ENCODE measurements at regions of chr22 and their contacts with region 1.

Region 1: DNA sequence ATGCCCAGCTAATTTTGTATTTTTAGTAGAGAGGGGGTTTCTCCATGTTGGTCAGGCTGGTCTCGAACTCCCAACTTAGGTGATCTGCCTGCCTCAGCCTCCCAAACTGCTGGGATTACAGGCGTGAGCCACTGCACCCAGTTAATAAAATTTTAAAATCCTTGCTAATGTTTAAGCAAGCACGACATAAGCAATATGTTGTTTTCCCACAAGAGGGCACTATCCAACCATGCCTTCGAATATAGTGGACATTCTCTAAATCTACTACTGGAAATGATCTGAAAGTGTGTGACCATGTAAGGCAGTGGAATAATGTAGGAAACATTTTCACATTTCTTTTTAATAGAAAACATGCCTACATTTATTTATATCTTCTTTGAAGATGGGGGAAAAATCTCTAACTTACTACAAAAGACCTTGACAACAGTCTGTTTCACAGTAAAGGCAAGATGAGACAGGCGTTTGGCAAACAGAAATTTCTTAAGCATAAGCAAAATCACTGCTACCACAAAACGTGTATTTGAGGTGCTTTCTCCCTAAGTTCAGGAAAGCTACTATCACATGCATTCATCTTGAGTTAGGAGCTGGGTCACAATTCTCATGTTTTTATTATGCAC is 38.2 kb downstream of the PITPNB start:
- DNase-seq: no peak
- H3K4me3 ChIP-seq: peak overlapping the region in 1 of 3 donors; percentile 13
- H3K27ac ChIP-seq: peak overlapping the region; percentile 68 to 75
- H3K4me1 ChIP-seq: peaks cover 0 to 9% of the 10 kb centered on the region in 2 donors
- H3K27me3 ChIP-seq: no peaks in the 10 kb centered on the region
- CTCF ChIP-seq: peak in 2 of 3 donors; percentile 69 to 78
- POLR2A ChIP-seq: no peak

Region 2: DNA sequence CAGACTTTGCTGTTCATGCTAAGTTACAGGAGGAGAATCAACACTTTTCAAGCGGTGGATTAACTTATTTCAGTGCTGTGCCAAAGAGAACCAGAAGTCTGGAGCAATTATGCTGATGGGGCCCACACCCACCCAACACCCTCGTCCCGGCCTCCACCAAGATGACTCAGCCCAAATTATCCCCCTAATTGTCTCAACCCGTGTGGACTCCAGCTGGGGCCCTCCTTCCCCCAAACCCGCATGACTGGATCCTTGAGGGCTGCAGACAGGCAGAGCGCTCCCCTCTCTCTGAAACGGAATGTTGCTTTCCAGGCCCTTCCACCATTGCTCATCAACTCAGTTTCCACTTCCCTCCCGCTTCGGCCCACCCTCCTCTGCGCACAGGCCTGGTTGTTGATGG is 44.7 kb before region 1 on chr22:
- intact Hi-C with region 1: no loop called
- DNase-seq: no peak
- H3K4me3 ChIP-seq: no peak overlapping the region
- H3K27ac ChIP-seq: peak overlapping the region in 1 of 2 donors; percentile 27
- H3K4me1 ChIP-seq: no peaks in the 10 kb centered on the region
- H3K27me3 ChIP-seq: no peaks in the 10 kb centered on the region
- CTCF ChIP-seq: no peak
- POLR2A ChIP-seq: no peak

Region 3: DNA sequence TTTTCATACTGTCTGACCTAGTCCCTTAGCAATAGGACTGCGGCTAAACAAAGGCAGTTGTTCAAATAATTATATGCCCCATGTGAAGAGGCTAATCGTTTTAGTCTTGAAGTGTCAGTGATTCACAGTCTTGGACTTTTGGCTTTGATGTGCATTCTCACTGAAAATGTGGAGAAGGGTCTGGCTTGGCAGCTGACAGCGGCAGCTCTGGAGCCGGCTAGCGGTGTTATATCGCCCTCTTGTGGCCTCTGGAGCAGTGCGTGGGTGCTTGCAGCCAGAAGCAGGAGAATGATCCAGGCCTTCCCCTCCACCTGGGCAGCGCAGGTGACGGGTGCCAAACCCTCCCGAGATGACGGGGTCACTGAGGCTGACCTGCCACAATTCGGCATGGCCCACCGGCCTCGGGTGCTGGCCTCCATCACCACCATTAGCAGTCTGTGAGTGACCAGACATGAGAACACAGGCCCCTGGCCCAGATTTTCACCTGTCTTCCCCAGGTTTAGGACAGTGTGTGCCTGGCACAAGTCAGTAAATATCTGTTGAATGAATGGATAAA is 128.5 kb after region 1 on chr22:
- intact Hi-C with region 1: loop called (anchors 10 kb)
- DNase-seq: peak; percentile 49 to 69
- H3K4me3 ChIP-seq: no peak overlapping the region
- H3K27ac ChIP-seq: no peak overlapping the region
- H3K4me1 ChIP-seq: peaks cover 0 to 3% of the 10 kb centered on the region in 2 donors
- H3K27me3 ChIP-seq: no peaks in the 10 kb centered on the region
- CTCF ChIP-seq: peak; percentile 55 to 89 (median 83)
- POLR2A ChIP-seq: no peak